Left cardiac atrium (tissue), 4 donors: ENCODE measurements at regions of chr2 and their contacts with region 1.

Region 1: DNA sequence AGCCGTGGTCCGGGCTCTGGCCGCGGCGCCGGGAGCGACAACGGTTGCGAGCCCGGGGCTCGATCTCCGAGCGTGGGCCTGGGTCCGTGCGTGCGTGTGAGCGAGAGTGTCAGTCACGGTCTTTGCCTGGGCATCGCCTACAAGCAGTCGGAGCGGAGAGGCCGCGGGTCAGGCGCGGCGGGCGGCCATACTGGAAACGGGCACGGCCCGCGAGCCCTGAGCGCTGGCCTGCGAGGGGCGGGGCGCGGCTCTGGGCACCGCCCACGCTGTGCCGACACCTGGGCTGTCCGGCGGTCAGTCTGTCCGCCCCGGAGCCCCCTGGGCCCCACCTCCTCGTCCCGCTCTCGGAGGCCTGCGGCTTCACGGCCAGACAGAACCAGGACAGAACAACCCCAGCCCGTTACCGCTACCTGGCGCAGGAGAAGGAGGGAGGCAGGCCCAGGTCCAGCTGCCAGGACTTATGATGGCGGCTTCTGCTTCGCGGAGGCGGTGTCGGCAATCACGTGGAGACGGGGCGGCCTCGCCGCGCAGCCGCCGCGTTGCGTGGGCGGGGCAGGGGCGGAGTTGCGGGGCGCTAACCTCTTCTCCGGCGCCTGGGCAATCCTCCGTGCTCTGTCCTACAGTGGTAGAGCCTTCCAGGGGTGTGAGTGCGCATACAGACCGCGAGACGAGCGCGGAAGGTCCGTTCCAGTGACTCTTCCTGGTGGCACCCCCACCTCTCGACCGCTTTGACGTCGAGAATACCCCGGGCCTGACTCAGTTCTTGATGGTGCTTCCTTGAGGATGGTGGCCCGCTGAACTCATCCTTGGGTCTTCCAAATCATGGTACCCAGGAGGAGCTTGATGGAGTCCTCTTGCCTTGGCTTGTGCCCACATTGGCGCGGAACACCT is at the start of gene TMEM131:
- DNase-seq: peak; percentile 95
- ATAC-seq: peak; percentile 97 to 98
- total RNA-seq, gene TMEM131: 26.2 to 26.5 TPM

Region 2: GRCh38 chr2:97806738-97807618 is 189.0 kb before region 1 on chr2:
- intact Hi-C with region 1: loop called in 1 of 2 experiments (anchors 10 kb)
- DNase-seq: peak; percentile 85
- ATAC-seq: peak; percentile 95 to 97

Region 3: GRCh38 chr2:97950329-97951154 is 45.4 kb before region 1 on chr2:
- intact Hi-C with region 1: no loop called
- DNase-seq: no peak
- ATAC-seq: peak; percentile 47 to 81

Region 4: GRCh38 chr2:97966518-97967215 is 29.3 kb before region 1 on chr2:
- intact Hi-C with region 1: no loop called
- DNase-seq: no peak
- ATAC-seq: no peak

Region 5: DNA sequence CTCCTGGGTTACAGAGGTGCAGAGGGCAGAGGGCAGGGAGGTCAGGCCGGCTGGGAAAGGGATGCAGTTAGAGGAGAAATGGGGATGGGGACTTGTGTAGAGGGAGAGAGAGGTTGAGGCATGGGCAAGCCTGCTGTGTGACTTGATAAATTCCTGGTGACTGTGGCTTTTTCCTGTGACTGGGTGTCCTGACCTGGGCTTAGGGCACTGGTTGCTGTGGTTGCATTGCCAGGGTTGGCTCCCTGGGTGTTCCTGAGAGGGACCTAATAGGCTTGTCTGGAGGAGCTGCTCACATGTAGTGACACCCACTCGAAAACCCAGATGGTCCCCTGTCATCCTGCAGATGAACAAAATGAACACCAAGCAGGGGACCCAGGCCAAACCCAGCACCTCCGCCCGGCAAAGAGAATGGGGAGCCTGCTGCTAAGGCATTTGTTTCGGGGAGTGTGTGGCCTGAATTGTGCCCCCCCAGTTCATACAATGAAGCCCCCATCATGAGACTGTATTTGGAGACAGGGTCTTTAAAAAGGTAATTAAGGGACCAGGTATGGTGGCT is 169.6 kb after region 1 on chr2:
- intact Hi-C with region 1: loop called (anchors 5 to 10 kb)
- DNase-seq: no peak
- ATAC-seq: no peak

Region 6: GRCh38 chr2:98175811-98176210 is 179.8 kb after region 1 on chr2:
- intact Hi-C with region 1: loop called in 1 of 2 experiments (anchors 10 kb)
- DNase-seq: no peak
- ATAC-seq: peak in 1 of 2 donors; percentile 40